ENCODE measurements at regions of chr6 and their contacts with region 1.

Region 1: GRCh38 chr6:11414176-11414963 is 123.2 kb upstream of the TMEM170B start:
- DNase-seq: peak in 6 of 9 donors; percentile 11 to 30 (median 18)
- ATAC-seq: peak; percentile 77
- H3K4me3 ChIP-seq: no peak overlapping the region
- H3K4me3 Mint-ChIP-seq: no peak overlapping the region
- H3K27ac ChIP-seq: no peak overlapping the region
- H3K27ac Mint-ChIP-seq: peak overlapping the region in 1 of 9 donors; percentile 10
- H3K4me1 ChIP-seq: peaks cover 0 to 4% of the 10 kb centered on the region in 2 donors
- H3K4me1 Mint-ChIP-seq: peaks cover 6 to 45% (median 10%) of the 10 kb centered on the region in 7 donors
- H3K27me3 ChIP-seq: no peaks in the 10 kb centered on the region
- H3K27me3 Mint-ChIP-seq: no peaks in the 10 kb centered on the region

Region 2: GRCh38 chr6:11366183-11366933 is 48.0 kb before region 1 on chr6:
- CTCF ChIA-PET with region 1: no interaction called
- POLR2A ChIA-PET with region 1: no interaction called
- intact Hi-C with region 1: loop called in 1 of 2 experiments (anchors 5 kb)
- DNase-seq: peak in 1 of 9 donors; percentile 46
- ATAC-seq: peak; percentile 89
- H3K4me3 ChIP-seq: no peak overlapping the region
- H3K4me3 Mint-ChIP-seq: peak overlapping the region in 8 of 10 donors; percentile 9 to 73 (median 45)
- H3K27ac ChIP-seq: no peak overlapping the region
- H3K27ac Mint-ChIP-seq: peak overlapping the region in 7 of 9 donors; percentile 38 to 90 (median 56)
- H3K4me1 ChIP-seq: peaks cover 0 to 22% of the 10 kb centered on the region in 2 donors
- H3K4me1 Mint-ChIP-seq: peaks cover 50 to 87% (median 77%) of the 10 kb centered on the region in 7 donors
- H3K27me3 ChIP-seq: no peaks in the 10 kb centered on the region
- H3K27me3 Mint-ChIP-seq: no peaks in the 10 kb centered on the region

Region 3: DNA sequence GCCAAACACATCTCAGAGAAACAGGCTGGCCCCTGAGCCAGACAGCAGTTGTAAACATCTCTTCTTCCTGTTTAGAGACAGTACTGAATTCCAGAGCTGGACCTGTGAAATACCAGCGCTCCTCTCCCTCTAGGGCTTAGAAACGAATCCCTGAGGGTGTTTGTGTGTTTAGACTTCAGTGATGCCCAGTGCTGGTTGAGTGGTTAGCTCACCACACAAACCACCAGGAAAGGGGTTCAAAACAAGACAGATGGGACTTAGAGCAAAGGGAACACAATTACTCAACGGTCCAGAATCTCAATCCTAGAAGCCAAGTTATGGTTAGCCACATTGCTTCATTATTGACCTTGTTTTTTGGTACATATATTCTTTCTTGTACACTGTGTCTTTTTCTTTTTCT is 14.5 kb after region 1 on chr6:
- CTCF ChIA-PET with region 1: no interaction called
- POLR2A ChIA-PET with region 1: no interaction called
- intact Hi-C with region 1: no loop called
- DNase-seq: no peak
- ATAC-seq: no peak
- H3K4me3 ChIP-seq: no peak overlapping the region
- H3K4me3 Mint-ChIP-seq: no peak overlapping the region
- H3K27ac ChIP-seq: no peak overlapping the region
- H3K27ac Mint-ChIP-seq: no peak overlapping the region
- H3K4me1 ChIP-seq: peaks cover 0 to 4% of the 10 kb centered on the region in 2 donors
- H3K4me1 Mint-ChIP-seq: peaks cover 0 to 21% (median 13%) of the 10 kb centered on the region in 7 donors
- H3K27me3 ChIP-seq: no peaks in the 10 kb centered on the region
- H3K27me3 Mint-ChIP-seq: no peaks in the 10 kb centered on the region

Region 4: DNA sequence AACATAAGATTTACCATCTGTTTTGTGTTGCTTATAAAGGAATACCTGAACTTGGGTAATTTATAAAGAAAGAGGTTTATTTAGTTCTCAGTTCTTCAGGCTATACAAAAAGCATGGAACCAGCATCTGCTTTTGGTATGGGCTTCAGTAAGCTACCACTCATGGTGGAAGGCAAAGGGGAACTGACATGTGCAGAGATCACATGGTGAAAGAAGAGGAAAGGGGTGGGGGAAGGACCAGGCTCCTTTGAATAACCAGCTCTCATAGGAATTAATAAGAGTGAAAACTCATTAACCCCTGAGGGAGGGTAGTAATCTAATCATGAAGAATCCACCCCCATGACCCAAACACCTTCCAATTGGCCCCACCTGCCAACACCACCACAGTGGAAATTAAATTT is 33.7 kb after region 1 on chr6:
- CTCF ChIA-PET with region 1: no interaction called
- POLR2A ChIA-PET with region 1: no interaction called
- intact Hi-C with region 1: no loop called
- DNase-seq: no peak
- ATAC-seq: no peak
- H3K4me3 ChIP-seq: no peak overlapping the region
- H3K4me3 Mint-ChIP-seq: no peak overlapping the region
- H3K27ac ChIP-seq: no peak overlapping the region
- H3K27ac Mint-ChIP-seq: no peak overlapping the region
- H3K4me1 ChIP-seq: no peaks in the 10 kb centered on the region
- H3K4me1 Mint-ChIP-seq: peaks cover 0 to 9% (median 0%) of the 10 kb centered on the region in 7 donors
- H3K27me3 ChIP-seq: no peaks in the 10 kb centered on the region
- H3K27me3 Mint-ChIP-seq: peaks cover 0 to 10% (median 5%) of the 10 kb centered on the region in 5 donors

Region 5: DNA sequence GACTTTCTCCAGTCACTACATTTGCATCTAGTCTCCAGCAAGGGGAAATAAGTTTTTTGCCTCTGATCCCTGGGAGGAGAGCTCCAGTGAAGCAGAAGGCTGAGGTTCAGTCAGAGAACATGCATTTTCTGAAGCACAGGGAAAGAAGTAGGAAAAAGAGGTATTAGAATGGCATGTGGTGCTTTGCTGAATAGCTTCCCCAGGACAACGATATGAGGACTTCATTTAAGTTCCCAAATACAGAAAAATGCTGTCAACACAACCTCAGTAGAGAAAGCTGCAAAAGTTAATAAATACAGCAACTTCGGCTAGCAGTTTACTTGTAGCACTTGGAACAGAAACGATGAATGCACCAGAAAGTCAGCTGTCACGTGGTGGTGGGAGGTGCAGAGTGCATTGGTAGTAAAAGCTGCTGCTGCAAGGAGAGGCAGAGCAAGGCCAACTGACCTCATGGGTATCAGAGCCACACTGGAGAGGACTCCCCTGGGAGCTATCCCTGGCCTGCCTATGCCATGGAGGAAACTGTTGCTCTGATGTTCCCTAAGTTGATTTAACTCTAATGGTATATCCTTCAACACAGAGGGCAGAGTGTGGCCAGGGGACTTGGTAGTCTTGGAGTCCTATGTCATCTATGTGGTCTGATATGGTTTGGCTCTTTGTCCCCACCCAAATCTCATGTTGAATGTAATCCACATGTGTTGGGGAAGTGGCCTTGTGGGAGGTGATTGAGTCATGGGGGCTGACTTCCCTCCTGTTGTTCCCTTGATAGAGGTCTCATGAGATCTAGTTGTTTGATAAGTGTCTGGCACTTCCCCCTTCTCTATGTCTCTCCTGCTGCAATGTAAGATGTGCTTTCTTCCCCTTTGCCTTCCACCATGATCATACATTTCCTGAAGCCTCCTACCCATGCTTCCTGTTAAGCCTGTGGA is 278.3 kb after region 1 on chr6:
- CTCF ChIA-PET with region 1: no interaction called
- POLR2A ChIA-PET with region 1: no interaction called
- intact Hi-C with region 1: no loop called
- DNase-seq: no peak
- ATAC-seq: peak; percentile 51
- H3K4me3 ChIP-seq: no peak overlapping the region
- H3K4me3 Mint-ChIP-seq: no peak overlapping the region
- H3K27ac ChIP-seq: no peak overlapping the region
- H3K27ac Mint-ChIP-seq: no peak overlapping the region
- H3K4me1 ChIP-seq: no peaks in the 10 kb centered on the region
- H3K4me1 Mint-ChIP-seq: peaks cover 0 to 6% (median 5%) of the 10 kb centered on the region in 7 donors
- H3K27me3 ChIP-seq: peaks cover 0 to 5% of the 10 kb centered on the region in 2 donors
- H3K27me3 Mint-ChIP-seq: peaks cover 0 to 5% (median 0%) of the 10 kb centered on the region in 5 donors